CD14-positive monocyte (primary cell): ENCODE measurements at regions of chr1 and their contacts with region 1.

Region 1: GRCh38 chr1:156096640-156097391 is 14.6 kb upstream of the MEX3A start:
- DNase-seq: peak; percentile 92 to 100 (median 97)
- H3K4me3 ChIP-seq: no peak overlapping the region
- H3K4me3 Mint-ChIP-seq: peak overlapping the region; percentile 57 to 85
- H3K27ac ChIP-seq: peak overlapping the region in 1 of 2 donors; percentile 30
- H3K27ac Mint-ChIP-seq: peak overlapping the region; percentile 78 to 97 (median 94)
- H3K4me1 ChIP-seq: peaks cover 10 to 19% of the 10 kb centered on the region in 2 donors
- H3K4me1 Mint-ChIP-seq: peaks cover 24% of the 10 kb centered on the region
- H3K27me3 ChIP-seq: peaks cover 53 to 100% of the 10 kb centered on the region in 2 donors
- H3K27me3 Mint-ChIP-seq: peaks cover 91 to 99% (median 99%) of the 10 kb centered on the region in 3 donors
- CTCF ChIP-seq: peak; percentile 97

Region 2: DNA sequence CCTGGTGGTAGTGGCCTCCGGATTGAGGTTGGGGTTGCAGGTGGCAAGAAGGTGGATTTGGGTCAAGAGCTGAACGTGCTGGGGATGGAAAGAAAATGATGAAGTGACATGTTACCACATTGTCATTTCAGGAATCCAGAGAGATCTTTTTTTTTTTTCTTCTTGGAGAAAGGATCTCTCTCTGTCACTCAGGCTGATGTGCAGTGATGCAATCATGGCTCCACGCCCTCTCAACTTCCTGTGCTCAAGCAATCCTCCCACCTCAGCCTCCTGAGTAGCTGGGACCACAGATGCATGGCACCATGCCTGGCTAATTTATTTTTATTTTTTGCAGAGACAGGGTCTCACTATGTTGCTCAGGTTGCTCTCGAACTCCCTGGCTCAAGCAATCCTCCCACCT is 320.4 kb before region 1 on chr1:
- intact Hi-C with region 1: no loop called
- DNase-seq: no peak
- H3K4me3 ChIP-seq: no peak overlapping the region
- H3K4me3 Mint-ChIP-seq: no peak overlapping the region
- H3K27ac ChIP-seq: no peak overlapping the region
- H3K27ac Mint-ChIP-seq: peak overlapping the region in 4 of 7 donors; percentile 20 to 57 (median 41)
- H3K4me1 ChIP-seq: peaks cover 4 to 9% of the 10 kb centered on the region in 2 donors
- H3K4me1 Mint-ChIP-seq: peaks cover 11% of the 10 kb centered on the region
- H3K27me3 ChIP-seq: no peaks in the 10 kb centered on the region
- H3K27me3 Mint-ChIP-seq: peaks cover 0 to 1% (median 0%) of the 10 kb centered on the region in 3 donors
- CTCF ChIP-seq: no peak

Region 3: DNA sequence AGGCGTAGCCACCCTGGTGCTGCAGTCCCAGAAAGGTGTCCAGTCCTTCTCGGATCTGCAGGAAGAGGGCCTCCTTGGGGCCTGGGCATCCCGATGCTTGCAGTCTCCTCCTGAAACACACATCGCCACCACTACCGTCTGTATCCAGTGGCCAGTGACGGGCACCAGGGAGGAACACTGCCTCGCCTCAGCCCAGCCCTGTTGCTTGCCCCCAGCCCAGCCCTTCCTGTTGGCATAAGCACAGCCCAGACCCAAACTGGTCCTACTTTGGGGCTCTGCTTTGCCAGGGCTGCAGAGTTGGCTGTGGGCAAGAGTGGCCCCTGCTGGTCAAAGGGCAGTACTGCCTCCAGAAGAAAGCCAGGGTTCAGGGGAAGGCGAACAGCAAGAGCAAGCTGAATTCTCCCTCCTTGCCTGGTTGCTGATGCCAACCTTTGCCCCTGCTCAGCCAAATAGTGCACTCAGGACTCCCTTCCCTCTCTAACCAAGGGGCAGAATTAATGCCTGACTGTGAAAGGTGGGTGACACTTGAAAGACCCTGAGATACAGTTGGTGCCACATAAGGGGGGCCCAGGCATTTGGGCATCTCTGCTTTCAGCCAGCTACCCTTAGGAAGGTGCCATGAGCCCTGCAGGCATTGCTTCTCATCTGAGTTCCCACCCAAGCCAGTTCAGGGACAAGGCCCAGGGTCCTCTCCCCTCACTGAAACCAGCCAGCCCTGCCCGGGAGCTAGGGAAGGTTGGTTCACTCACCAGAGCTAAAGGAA is 107.4 kb before region 1 on chr1:
- intact Hi-C with region 1: no loop called
- DNase-seq: peak; percentile 80 to 89 (median 85)
- H3K4me3 ChIP-seq: peak overlapping the region; percentile 28 to 72 (median 35)
- H3K4me3 Mint-ChIP-seq: peak overlapping the region; percentile 79 to 89
- H3K27ac ChIP-seq: peak overlapping the region; percentile 94 to 97
- H3K27ac Mint-ChIP-seq: peak overlapping the region; percentile 97 to 100 (median 99)
- H3K4me1 ChIP-seq: peaks cover 40 to 41% of the 10 kb centered on the region in 2 donors
- H3K4me1 Mint-ChIP-seq: peaks cover 50% of the 10 kb centered on the region
- H3K27me3 ChIP-seq: no peaks in the 10 kb centered on the region
- H3K27me3 Mint-ChIP-seq: no peaks in the 10 kb centered on the region
- CTCF ChIP-seq: peak; percentile 99

Region 4: DNA sequence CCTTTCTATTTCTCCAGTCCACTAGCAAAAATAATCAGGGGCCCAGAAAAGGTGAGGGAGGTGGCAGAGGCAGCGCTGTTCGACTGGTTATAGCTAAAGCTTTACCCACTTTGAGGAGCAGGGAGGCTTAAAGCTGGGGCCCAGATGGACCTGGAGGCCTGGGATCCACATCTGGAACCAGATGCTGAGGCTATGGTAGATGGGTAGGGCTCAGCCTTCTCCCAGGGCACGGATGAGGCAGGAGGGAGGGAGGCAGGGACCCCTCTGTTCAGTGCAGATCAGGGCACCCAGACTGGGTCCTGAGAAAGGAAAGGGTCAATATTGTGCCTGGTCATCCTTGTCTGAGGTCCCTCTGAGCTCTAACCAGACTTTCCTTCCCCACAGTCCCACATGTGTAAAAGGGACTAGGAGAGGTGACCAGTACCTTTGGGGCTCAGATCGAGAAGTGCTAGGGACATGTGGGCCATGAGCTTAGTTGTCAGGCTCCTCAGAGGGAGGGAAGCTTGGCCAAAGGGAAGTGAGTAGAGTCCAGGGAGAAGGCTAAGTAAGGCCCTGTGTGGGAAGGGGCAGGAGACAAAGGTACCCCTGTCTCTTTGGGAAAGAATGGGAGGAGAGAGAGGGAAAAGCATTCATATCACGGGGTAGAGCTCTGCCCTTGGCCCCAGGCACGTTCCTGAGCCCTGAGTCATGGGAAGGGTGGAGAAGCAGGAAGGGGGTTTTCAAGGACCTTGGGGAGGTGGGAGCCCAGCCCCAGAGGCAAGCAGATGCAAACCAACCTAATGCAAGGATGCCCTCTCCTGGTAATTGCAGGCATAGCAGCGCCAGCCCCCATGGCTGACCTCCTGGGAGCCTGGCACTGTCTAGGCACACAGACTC is 33.1 kb after region 1 on chr1:
- intact Hi-C with region 1: loop called (anchors 2 kb)
- DNase-seq: peak; percentile 75 to 92 (median 86)
- H3K4me3 ChIP-seq: no peak overlapping the region
- H3K4me3 Mint-ChIP-seq: peak overlapping the region in 1 of 2 donors; percentile 82
- H3K27ac ChIP-seq: no peak overlapping the region
- H3K27ac Mint-ChIP-seq: peak overlapping the region in 6 of 7 donors; percentile 23 to 86 (median 78)
- H3K4me1 ChIP-seq: peaks cover 42 to 46% of the 10 kb centered on the region in 2 donors
- H3K4me1 Mint-ChIP-seq: peaks cover 50% of the 10 kb centered on the region
- H3K27me3 ChIP-seq: peaks cover 30 to 89% of the 10 kb centered on the region in 2 donors
- H3K27me3 Mint-ChIP-seq: peaks cover 80 to 95% (median 93%) of the 10 kb centered on the region in 3 donors
- CTCF ChIP-seq: peak; percentile 97

Region 5: GRCh38 chr1:156160743-156161171 is 63.9 kb after region 1 on chr1:
- intact Hi-C with region 1: loop called in 1 of 2 experiments (anchors 10 kb)
- DNase-seq: no peak
- H3K4me3 ChIP-seq: no peak overlapping the region
- H3K4me3 Mint-ChIP-seq: peak overlapping the region; percentile 39 to 59
- H3K27ac ChIP-seq: no peak overlapping the region
- H3K27ac Mint-ChIP-seq: peak overlapping the region in 4 of 7 donors; percentile 24 to 72 (median 56)
- H3K4me1 ChIP-seq: peaks cover 26 to 28% of the 10 kb centered on the region in 2 donors
- H3K4me1 Mint-ChIP-seq: peaks cover 49% of the 10 kb centered on the region
- H3K27me3 ChIP-seq: no peaks in the 10 kb centered on the region
- H3K27me3 Mint-ChIP-seq: peaks cover 0 to 4% (median 2%) of the 10 kb centered on the region in 3 donors
- CTCF ChIP-seq: no peak